BJ (cell line): ENCODE measurements at regions of chr12 and their contacts with region 1.

Region 1: DNA sequence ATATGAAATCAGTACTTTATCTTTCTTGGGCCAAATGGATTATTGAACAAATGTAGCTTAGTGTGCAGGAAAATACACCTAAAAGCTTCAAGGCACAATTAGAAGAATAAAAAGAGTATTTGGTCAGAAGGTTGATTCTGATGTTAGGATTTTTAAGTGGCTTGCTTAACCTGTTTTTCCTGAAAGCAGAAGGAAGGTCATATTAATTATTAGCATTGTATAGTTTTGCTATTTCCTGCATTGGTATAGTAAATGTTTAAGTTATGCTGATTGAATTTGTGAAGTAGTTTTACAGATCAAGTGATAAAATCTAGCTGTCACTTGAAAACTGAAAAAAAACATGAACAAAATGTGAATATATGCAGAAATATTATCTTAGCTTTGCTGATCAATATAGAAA is 31.0 kb upstream of the GNS start:
- DNase-seq: no peak
- H3K4me3 ChIP-seq: no peak overlapping the region
- H3K27me3 ChIP-seq: no peaks in the 10 kb centered on the region; the same call in 1 of the 2 replicates
- CTCF ChIP-seq: no peak

Region 2: GRCh38 chr12:64801381-64801780 is 11.2 kb after region 1 on chr12:
- CTCF ChIA-PET with region 1: interaction called, 15 read pairs
- POLR2A ChIA-PET with region 1: no interaction called
- DNase-seq: no peak
- H3K4me3 ChIP-seq: no peak overlapping the region
- H3K27me3 ChIP-seq: peaks cover 7% of the 10 kb centered on the region
- CTCF ChIP-seq: peak; percentile 40